Sciatic nerve (tissue), 2 donors: ENCODE measurements at regions of chr2 and their contacts with region 1.

Region 1: DNA sequence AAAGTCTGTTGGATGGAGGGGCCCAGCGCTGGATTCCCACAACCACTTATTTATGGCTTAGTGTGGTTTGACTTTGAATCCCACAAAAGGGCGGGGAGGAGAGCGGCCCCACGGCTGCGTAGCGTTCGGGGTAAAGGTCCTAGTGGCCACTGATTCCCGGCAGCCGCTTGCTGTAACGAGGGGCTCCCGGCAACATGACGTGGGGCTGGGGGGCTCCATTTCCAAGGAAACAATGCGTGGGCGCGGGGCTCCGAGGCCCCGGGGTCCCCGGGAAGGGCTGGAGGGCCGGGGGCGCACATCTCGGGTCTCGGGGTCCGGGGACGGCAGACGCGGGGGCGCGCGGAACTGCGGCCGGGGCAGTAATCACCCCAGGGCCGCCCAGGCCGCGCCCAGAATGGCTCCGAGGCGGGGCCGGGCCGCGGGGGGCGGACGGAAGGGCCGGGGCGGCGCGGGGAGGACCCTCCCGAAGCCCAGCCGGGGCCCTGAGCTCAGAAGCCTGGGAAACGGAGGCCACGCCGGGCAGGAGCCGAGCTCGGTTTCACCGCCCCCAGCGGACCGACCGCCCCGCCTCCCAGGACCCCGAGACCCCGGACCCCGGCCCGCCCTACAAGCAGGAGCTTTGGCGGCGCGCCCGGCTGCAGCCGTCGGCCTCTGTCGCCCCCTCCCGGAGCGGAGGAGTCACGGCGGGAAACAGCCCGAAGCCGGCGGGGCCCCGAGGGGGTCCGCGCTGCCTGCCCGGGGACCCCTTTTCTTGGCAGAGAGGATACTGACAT is 11.9 kb upstream of the MLPH start:
- DNase-seq: peak; percentile 93
- ATAC-seq: peak; percentile 79

Region 2: DNA sequence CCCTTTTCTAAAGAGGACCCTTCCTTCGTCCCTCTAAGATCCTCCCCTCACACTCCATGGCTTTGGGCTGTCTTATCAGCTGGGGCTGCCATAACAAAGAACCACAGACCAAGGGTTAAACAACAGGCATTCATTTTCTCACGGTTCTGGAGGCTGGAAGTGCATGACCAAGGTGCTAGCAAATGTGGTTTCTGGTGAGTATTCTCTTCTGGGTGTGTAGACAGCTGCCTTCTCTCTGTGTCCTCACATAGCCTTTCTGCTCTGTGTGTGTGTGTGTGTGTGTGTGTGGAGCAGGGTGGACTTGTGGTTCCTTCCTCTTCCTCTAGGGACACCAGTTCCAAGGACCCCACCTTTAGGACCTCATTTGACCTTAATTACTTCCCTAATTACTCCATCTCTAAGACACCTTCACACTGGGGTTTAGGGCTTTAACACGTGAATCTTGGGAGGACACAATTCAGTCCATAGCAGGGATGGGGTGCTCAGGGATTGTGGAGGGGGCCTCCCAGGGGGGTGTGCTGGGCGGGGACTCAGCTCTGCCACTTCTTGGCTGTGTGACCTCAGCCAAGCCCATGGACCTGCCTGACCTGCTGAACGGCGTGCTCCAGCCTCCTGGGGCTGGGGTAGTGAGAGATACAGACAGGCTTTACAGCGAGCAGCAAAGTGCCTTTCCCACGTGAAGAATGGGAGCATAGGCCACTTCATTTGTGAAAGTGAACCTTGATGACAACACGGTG is 867.5 kb before region 1 on chr2:
- intact Hi-C with region 1: no loop called
- DNase-seq: no peak
- ATAC-seq: peak; percentile 63

Region 3: GRCh38 chr2:237413777-237414661 is 61.1 kb before region 1 on chr2 and contains the start of gene COL6A3:
- intact Hi-C with region 1: loop called (anchors 2 kb)
- DNase-seq: peak; percentile 89
- ATAC-seq: peak; percentile 84
- total RNA-seq, gene COL6A3: 198 TPM